MCF 10A (cell line): ENCODE measurements at regions of chr5 and their contacts with region 1.

Region 1: DNA sequence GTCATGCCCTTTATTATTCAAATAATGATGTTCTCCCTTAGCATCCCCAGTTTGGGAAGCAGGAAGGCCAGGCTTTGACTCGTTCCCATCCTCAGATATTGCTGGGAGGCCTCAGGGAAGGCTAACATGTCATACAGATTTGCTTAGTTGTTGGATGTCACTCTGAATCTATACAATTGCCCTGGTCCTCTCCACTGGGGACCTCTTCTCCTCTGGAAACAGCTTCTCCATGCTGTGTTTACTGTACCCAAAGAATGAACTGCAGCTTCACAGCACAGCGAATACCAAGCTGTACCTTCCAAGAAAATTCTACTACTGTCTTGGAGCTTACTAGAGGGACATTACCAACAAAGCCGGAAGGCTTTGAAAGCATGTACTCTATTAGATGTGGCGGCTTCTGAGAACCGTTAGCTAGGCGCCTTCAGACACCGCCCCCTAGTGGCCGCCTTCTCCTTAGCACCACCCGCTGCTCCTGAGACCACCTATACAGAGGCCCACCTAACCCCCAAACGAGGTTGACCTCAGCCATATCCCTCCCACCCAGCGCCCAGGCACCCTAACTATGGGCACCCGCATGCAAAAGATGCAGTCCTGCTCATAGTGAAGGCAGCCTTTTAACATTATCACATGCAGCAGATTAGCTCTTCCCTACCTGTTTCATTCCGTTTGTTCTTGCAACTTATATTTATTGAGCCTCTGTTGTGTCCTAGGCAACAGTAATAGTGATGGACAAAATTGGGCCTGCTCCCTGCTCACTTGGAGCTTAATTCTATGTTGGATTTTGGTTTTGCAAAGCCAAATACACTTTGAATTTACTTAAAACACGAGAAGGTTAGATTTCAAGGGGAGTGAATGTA is 34.9 kb upstream of the FOXI1 start:
- DNase-seq: peak; percentile 60
- H3K4me3 Mint-ChIP-seq: no peak overlapping the region
- H3K27ac Mint-ChIP-seq: no peak overlapping the region
- H3K4me1 Mint-ChIP-seq: no peaks in the 10 kb centered on the region
- H3K27me3 Mint-ChIP-seq: peaks cover 31% of the 10 kb centered on the region
- CTCF ChIP-seq: peak; percentile 81

Region 2: GRCh38 chr5:170017772-170018171 is 53.0 kb before region 1 on chr5:
- CTCF ChIA-PET with region 1: interaction called, 10 read pairs
- POLR2A ChIA-PET with region 1: no interaction called
- intact Hi-C with region 1: no loop called
- DNase-seq: no peak
- H3K4me3 Mint-ChIP-seq: no peak overlapping the region
- H3K27ac Mint-ChIP-seq: no peak overlapping the region
- H3K4me1 Mint-ChIP-seq: no peaks in the 10 kb centered on the region
- H3K27me3 Mint-ChIP-seq: peaks cover 26% of the 10 kb centered on the region
- CTCF ChIP-seq: no peak

Region 3: GRCh38 chr5:170056561-170057267 is 14.1 kb before region 1 on chr5:
- CTCF ChIA-PET with region 1: interaction called, 62 read pairs
- POLR2A ChIA-PET with region 1: no interaction called
- intact Hi-C with region 1: no loop called
- DNase-seq: no peak
- H3K4me3 Mint-ChIP-seq: no peak overlapping the region
- H3K27ac Mint-ChIP-seq: no peak overlapping the region
- H3K4me1 Mint-ChIP-seq: no peaks in the 10 kb centered on the region
- H3K27me3 Mint-ChIP-seq: no peaks in the 10 kb centered on the region
- CTCF ChIP-seq: no peak